Gastrocnemius medialis (tissue), 4 donors: ENCODE measurements at regions of chr7 and their contacts with region 1.

Region 1: DNA sequence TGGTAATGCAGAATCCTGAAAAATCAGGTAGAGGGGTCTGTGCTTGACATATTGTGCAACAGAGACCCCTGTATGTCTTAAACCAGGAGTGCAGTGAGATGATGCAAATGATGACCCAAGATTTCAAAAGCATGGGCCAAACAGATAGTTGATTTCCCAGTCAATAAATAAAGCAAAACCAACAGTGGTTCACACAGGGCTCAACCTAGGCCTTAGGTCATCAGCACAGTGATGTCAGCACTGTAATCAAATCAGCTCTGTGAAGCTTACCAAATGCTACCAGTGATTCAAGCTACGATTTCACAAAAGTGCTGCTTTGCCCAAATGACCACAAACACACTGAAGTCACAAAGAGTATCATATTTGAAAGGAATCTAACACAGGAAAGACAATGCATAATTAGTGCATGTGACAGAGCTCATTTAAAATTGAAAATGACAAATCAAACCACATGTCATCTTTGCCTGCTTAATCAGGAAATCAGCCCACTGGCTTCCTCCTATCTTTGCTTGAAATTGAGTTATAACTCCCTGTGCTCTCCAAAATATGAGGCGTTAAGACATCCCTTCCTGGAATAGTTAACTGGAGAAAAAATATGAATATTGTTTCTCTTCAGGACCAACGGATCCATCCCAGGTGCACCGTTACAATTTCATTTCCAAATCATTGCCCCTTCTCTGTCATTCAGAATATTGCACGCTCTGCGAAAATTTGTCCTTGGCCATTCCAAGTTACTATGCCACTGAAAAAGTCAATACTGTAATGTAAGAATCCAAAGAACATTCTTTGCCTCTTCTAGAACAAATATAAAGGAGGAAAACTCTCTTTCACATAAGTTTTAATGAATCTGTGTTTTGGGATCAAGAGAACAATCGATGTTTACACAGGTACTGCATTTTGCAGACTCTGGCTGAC is 41.9 kb upstream of the ASL start:
- DNase-seq: no peak
- ATAC-seq: no peak
- H3K4me3 ChIP-seq: no peak overlapping the region
- H3K27ac ChIP-seq: no peak overlapping the region
- H3K4me1 ChIP-seq: no peaks in the 10 kb centered on the region
- H3K27me3 ChIP-seq: no peaks in the 10 kb centered on the region
- CTCF ChIP-seq: no peak
- POLR2A ChIP-seq: no peak

Region 2: GRCh38 chr7:66083677-66084076 is 49.9 kb after region 1 on chr7:
- in situ Hi-C with region 1: no loop called
- intact Hi-C with region 1: no loop called
- DNase-seq: no peak
- ATAC-seq: no peak
- H3K4me3 ChIP-seq: no peak overlapping the region
- H3K27ac ChIP-seq: no peak overlapping the region
- H3K4me1 ChIP-seq: no peaks in the 10 kb centered on the region
- H3K27me3 ChIP-seq: no peaks in the 10 kb centered on the region
- CTCF ChIP-seq: no peak
- POLR2A ChIP-seq: no peak

Region 3: GRCh38 chr7:66413379-66414114 is 379.8 kb after region 1 on chr7:
- in situ Hi-C with region 1: no loop called
- intact Hi-C with region 1: loop called (anchors 5 kb)
- DNase-seq: peak; percentile 28 to 62
- ATAC-seq: peak; percentile 75 to 83
- H3K4me3 ChIP-seq: peak overlapping the region; percentile 57 to 80 (median 58)
- H3K27ac ChIP-seq: peak overlapping the region; percentile 38 to 72 (median 60)
- H3K4me1 ChIP-seq: peaks cover 0 to 7% of the 10 kb centered on the region in 2 donors
- H3K27me3 ChIP-seq: no peaks in the 10 kb centered on the region
- CTCF ChIP-seq: peak in 4 of 5 experiments; percentile 10 to 32 (median 30)
- POLR2A ChIP-seq: no peak